ENCODE measurements at regions of chr16 and their contacts with region 1.

Region 1: GRCh38 chr16:47141773-47142485 is 1.8 kb downstream of the NETO2 start:
- DNase-seq: peak; percentile 88
- H3K4me3 ChIP-seq: peak overlapping the region; percentile 59
- H3K27ac ChIP-seq: no peak overlapping the region
- H3K4me1 ChIP-seq: peaks cover 19% of the 10 kb centered on the region
- CTCF ChIP-seq: peak; percentile 99

Region 2: GRCh38 chr16:47037746-47038458 is 104.0 kb before region 1 on chr16:
- CTCF ChIA-PET with region 1: interaction called, 3 read pairs
- POLR2A ChIA-PET with region 1: no interaction called
- intact Hi-C with region 1: loop called (anchors 2 kb)
- DNase-seq: peak; percentile 88
- H3K4me3 ChIP-seq: peak overlapping the region; percentile 73
- H3K27ac ChIP-seq: no peak overlapping the region
- H3K4me1 ChIP-seq: peaks cover 25% of the 10 kb centered on the region
- CTCF ChIP-seq: peak; percentile 87

Region 3: DNA sequence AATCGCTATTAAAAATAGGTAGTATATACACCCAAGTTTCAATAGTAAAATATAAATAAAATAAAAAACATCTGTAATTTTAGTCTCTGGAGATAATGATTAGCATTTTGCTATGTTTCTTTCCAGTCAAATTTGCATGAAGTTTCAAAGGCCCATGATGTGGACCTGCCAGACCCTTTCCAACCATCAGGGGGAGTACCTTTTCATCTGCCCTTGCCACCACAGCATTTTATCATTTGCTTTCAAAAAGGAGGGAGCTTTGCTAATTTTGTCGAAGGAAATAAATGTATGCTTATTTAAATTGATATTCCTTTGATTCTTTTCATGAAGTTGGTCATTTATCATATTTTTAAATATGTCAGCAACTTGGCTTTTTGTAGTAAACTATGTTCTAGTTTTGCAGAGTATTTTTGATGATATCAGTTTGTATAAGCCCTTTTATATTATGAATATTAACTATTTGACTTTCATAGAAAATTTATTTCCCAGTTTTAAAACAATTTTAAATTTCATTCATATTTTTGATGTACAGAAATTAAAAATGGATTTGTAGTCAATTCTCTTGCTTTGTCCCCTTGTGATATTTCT is 117.0 kb after region 1 on chr16:
- CTCF ChIA-PET with region 1: no interaction called
- POLR2A ChIA-PET with region 1: no interaction called
- intact Hi-C with region 1: no loop called
- DNase-seq: peak; percentile 47
- H3K4me3 ChIP-seq: no peak overlapping the region
- H3K27ac ChIP-seq: no peak overlapping the region
- H3K4me1 ChIP-seq: no peaks in the 10 kb centered on the region
- CTCF ChIP-seq: peak; percentile 88

Region 4: DNA sequence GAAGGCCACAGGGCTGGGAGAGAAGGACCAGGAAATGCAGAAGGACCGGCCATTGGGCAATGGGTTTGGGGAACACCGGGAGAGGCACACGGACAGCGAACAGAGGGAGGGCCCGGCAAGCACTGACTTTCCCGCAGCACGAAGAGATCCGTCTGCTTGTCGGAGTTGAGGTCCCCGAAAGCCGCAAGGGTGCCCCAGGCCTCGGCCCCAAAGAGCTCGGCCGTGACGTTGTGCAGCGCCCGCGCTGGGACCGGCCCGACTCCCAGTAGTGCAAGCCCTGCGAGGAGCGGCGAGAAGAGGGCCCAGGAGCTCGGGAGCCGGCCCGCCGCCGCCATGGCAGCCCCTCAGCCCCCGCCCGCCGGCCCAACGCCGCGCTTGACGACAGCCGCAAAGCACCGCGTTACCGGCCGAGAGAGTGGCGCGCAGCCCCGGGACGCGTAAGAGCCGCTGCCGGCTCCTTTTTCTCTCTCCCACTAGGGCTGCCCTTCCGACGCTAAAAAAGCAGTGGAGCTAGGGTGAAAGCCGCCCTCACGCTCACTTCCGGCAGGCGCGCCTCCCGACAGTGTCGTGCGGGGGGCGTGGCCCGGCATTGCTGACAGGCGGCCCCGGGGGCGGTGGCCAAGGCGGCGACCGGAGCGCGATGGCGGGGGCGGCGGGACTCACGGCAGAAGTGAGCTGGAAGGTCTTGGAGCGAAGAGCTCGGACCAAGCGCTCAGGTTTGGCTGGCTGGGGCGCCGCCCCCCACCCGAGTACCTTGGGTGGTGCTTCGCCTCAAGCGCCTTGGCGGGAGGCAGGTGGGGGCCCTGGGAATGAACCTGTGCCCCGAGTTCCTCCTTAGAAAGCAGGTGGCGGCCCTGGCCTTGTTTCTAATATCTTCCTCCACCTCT is 319.0 kb after region 1 on chr16 and contains the starts of genes ITFG1 and PHKB:
- CTCF ChIA-PET with region 1: no interaction called
- POLR2A ChIA-PET with region 1: interaction called, 3 read pairs
- intact Hi-C with region 1: loop called (anchors 5 kb)
- DNase-seq: peak; percentile 96
- H3K4me3 ChIP-seq: peak within 1 kb of the TSS; percentile 89
- H3K27ac ChIP-seq: peak within 1 kb of the TSS; percentile 82
- H3K4me1 ChIP-seq: peaks cover 48% of the 10 kb centered on the region
- CTCF ChIP-seq: 0 out of 2 replicates have a peak, but pooled peaks have one; percentile 4
- total RNA-seq, gene ITFG1: 18.2 and 33.7 TPM in 2 replicates
- total RNA-seq, gene PHKB: 56.9 and 68.1 TPM in 2 replicates

Region 5: DNA sequence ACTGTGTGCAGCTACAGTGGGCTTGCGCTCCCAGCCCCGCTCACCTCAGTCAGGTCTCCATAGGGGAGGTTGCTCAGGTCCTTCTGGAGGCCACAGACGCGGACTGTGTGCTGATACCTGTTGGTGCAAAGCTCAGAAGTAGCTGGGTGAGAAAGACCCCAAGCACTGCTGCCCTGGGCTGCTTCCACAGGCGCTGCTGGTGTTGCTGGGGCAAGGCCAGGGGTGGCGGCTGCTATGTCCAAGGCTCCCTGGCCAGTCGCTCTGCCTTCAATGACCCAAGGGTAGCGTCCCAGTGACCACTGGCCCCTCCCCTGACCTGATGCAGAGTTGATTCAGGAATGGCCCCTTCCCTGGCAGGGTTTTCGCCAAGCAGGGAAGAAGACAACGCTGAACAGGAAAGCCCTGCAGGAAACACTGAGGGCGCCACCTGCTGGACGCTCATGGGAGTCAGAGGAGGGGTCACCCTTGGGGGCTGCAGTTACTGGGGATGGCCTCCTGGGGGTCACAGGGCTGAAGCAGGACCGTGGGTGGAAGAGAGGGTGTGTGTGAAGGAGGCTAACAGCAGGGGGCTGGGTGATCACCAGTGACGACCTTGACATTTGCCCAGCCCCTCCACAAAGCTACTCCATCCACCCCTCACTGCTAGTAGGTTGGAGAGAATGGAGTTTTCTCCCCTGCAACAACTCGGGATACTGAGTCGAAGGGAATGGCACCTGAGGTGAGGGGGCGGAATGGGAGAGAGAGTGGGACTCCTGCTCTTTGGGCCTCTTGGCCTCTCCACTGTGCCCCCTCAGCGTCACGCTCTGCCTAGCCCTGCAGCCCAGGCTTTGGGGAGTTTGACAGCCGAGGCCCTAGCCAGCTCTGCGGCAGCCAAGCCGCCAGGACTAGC is 975.5 kb after region 1 on chr16:
- CTCF ChIA-PET with region 1: no interaction called
- POLR2A ChIA-PET with region 1: no interaction called
- intact Hi-C with region 1: loop called (anchors 1 kb)
- DNase-seq: peak; percentile 71
- H3K4me3 ChIP-seq: no peak overlapping the region
- H3K27ac ChIP-seq: no peak overlapping the region
- H3K4me1 ChIP-seq: no peaks in the 10 kb centered on the region
- CTCF ChIP-seq: peak; percentile 94

Region 6: DNA sequence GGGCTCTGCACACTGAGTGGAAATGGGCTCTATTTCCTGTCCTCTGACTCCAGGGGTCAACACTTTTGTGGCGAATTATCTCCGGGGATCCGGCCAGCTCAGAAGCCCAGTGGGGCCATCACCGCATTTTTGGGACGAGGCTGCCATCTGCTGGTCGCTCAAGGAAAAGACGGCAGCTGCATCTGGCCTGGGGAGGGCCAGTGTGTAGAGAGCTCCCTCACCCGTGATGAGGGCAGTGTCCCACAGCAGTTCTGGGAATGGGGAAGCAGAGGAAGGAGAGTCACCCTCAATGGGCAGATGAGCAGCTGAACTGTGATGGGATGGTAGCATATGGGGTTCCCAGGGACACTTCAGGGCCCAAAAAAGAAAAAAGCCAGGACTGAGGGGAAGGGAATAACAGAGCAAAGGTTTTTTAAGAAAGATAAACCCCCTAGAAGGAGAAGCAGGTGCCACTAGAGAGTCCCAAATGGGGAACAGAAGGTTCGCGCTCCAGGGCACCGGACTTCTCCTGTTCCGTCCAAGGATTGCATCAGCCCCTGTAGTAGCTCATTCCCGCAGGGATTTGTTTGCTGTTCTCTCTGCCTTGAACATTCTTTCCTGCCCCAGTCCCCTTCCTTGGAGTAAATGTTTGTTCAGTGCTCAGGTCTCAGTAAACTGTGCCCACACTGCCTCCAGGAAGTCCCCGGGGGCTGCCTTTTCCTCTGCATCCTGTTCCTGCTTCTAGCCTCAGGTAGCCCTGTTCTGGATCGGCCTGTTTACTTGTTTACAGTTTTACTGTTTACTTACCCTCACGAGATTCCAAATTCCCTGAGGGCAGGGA is 1023.2 kb after region 1 on chr16:
- CTCF ChIA-PET with region 1: interaction called, 3 read pairs
- POLR2A ChIA-PET with region 1: no interaction called
- intact Hi-C with region 1: loop called (anchors 2 kb)
- DNase-seq: peak; percentile 53
- H3K4me3 ChIP-seq: no peak overlapping the region
- H3K27ac ChIP-seq: no peak overlapping the region
- H3K4me1 ChIP-seq: no peaks in the 10 kb centered on the region
- CTCF ChIP-seq: peak; percentile 88